Psoas muscle (tissue), 8 donors: ENCODE measurements at regions of chr6 and their contacts with region 1.

Region 1: DNA sequence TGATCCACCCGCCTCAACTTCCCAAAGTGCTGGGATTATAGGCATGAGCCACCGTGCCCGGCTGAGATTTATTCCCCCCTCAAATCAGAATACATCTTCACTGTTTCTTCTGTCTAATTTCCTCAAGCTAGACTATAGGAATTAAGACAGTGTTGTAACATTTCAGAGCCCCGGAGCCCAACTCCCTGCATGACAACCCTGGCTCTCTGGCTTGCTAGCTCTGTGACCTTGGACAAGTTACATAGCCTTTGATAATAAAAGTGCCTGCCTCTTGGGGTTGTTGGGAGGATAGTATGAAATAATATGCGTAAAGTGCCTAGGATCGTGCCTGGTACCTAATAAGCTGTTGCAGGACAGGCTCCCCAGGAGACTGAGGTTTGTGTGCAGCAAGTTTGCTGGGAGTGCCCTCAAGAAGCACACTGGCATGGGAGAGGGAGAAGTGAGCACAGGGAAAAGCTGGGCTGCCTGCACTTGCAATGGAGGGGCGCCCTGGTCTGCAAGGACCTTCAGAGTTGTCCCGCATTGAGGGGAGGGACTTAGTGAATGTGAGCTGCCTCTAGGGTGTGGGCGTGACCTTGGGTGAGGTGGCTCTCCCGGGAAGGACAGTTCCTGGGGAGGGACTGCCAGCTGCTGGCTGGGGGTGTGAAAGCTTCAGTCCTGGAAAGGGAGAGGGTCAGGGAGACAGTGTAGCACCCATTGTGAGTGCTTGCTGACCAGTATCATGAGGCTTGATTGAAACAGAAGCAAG is 43.4 kb downstream of the TAF8 start:
- DNase-seq: no peak
- ATAC-seq: no peak
- H3K4me3 ChIP-seq: no peak overlapping the region
- H3K27ac ChIP-seq: no peak overlapping the region
- H3K4me1 ChIP-seq: no peaks in the 10 kb centered on the region
- H3K27me3 ChIP-seq: no peaks in the 10 kb centered on the region
- CTCF ChIP-seq: no peak

Region 2: DNA sequence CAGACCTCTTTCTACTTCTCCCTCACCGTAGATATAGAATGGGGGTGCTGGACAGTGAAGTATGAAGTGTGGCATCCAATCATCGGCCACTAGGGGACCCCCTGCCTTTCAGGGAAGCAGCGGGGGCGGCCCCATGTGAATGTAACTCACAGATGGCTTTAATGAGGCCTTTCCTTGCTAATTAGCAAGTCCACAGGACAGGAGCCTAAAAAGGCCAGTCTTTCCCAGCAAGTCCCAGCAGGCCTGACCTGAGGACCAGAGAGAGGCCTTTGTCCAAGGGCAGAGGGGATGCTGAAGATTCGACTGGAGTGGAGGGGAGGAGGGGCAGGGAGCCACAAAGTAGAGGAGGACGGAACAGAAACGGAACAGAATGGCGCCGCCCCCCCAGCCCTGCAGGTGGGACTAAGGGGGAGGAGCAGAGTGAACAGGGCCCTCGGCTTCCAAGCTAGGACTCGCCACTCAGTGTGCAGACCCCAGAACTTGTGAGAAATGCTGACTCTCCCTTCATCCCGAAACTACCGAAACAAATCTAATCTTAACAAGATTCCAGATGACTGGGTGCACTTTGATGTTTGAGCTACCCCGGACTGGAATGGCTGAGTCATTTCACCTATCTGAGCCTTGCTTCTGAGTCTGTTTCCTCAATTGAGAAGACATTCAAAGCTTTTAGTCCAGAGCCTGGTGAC is 42.9 kb after region 1 on chr6:
- intact Hi-C with region 1: no loop called
- DNase-seq: no peak
- ATAC-seq: no peak
- H3K4me3 ChIP-seq: no peak overlapping the region
- H3K27ac ChIP-seq: no peak overlapping the region
- H3K4me1 ChIP-seq: no peaks in the 10 kb centered on the region
- H3K27me3 ChIP-seq: peaks cover 0 to 16% (median 0%) of the 10 kb centered on the region in 3 donors
- CTCF ChIP-seq: no peak

Region 3: DNA sequence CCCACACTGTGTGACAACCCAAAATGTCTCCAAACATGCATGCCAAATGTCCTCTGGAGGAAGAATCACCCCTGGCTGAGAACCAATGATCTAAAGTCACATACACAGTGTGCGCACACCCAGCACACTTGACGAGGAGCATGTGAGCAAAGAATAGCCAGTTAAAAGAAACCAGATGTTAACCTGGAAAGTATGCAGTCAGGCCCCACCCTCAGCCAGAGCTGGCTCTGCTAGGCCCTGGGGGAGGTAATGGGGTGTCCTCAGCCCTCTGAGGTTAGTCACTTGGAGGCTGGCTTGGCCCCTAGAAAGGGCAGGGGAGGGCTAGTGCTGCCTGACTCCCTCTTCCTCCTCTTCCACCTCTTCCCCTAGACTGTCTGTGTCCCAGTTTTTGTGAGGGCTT is 64.3 kb after region 1 on chr6:
- intact Hi-C with region 1: loop called in 1 of 2 experiments (anchors 5 kb)
- DNase-seq: no peak
- ATAC-seq: peak in 1 of 4 donors; percentile 23
- H3K4me3 ChIP-seq: no peak overlapping the region
- H3K27ac ChIP-seq: no peak overlapping the region
- H3K4me1 ChIP-seq: no peaks in the 10 kb centered on the region
- H3K27me3 ChIP-seq: peaks cover 0 to 5% (median 4%) of the 10 kb centered on the region in 3 donors
- CTCF ChIP-seq: no peak